ENCODE measurements at regions of chr1 and their contacts with region 1.

Region 1: DNA sequence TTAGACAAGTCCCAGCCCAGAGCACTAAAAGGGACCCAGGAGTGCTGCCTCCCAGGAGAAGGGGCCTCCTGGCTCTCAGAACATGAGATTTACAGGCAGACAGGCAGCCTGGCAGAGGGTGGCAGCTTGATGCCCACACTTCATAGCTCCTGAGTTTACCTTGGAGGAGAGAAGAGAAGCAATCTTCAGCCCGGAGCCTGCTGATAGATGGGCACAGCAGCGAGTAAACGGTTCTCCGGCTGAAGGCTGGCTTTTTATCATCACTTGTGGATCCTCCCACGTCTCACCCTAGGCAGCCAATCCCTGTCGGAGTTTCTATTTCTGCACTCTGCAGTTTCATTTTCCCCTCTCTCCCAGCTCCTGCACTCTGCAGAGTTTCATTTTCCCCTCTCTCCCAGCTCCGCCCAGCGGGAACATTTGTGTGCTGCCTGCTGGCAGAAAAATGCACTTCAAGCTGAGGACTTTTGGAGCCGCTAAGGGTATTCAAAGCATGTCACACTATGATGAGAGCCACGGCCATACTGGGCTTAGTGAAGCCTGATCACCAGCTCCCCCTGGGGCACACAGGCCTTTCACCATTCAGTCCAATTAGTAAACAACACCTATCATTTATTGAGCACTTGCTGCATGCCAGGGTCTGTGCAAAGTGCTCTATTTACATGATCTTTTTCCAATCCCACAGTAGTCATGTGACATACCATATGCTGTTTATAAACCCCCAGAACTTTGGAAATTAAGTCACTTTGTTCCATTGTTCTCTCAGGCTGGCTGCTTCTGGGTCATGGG is at the start of gene IFI6:
- DNase-seq: peak; percentile 54 to 90 (median 71)
- ATAC-seq: peak; percentile 91 to 95 (median 93)
- H3K4me3 ChIP-seq: peak within 1 kb of the TSS; percentile 58 to 71
- H3K4me3 Mint-ChIP-seq: peak within 1 kb of the TSS; percentile 89 to 97 (median 95)
- H3K27ac ChIP-seq: peak within 1 kb of the TSS; percentile 91
- H3K27ac Mint-ChIP-seq: peak within 1 kb of the TSS; percentile 98 to 99
- H3K4me1 ChIP-seq: peaks cover 12 to 42% of the 10 kb centered on the region in 2 experiments
- H3K4me1 Mint-ChIP-seq: peaks cover 32 to 46% (median 43%) of the 10 kb centered on the region in 3 donors
- H3K27me3 ChIP-seq: no peaks in the 10 kb centered on the region
- H3K27me3 Mint-ChIP-seq: no peaks in the 10 kb centered on the region
- total RNA-seq, gene IFI6: 28.2 to 52.1 (median 40.7) TPM

Region 2: GRCh38 chr1:27365372-27366112 is 306.6 kb before region 1 on chr1:
- CTCF ChIA-PET with region 1: no interaction called
- POLR2A ChIA-PET with region 1: no interaction called
- DNase-seq: peak; percentile 37 to 84 (median 70)
- ATAC-seq: peak; percentile 70 to 76 (median 72)
- H3K4me3 ChIP-seq: peak overlapping the region; percentile 53 to 68
- H3K4me3 Mint-ChIP-seq: peak overlapping the region; percentile 85 to 87 (median 86)
- H3K27ac ChIP-seq: no peak overlapping the region
- H3K27ac Mint-ChIP-seq: peak overlapping the region; percentile 57 to 82
- H3K4me1 ChIP-seq: peaks cover 15 to 41% of the 10 kb centered on the region in 2 experiments
- H3K4me1 Mint-ChIP-seq: peaks cover 38 to 48% (median 43%) of the 10 kb centered on the region in 3 donors
- H3K27me3 ChIP-seq: peaks cover 0 to 11% of the 10 kb centered on the region in 2 experiments
- H3K27me3 Mint-ChIP-seq: no peaks in the 10 kb centered on the region

Region 3: GRCh38 chr1:27719286-27720251 is 47.4 kb after region 1 on chr1:
- CTCF ChIA-PET with region 1: interaction called, 3 to 5 read pairs
- POLR2A ChIA-PET with region 1: interaction called in 1 of 2 experiments, 10 read pairs
- DNase-seq: peak in 3 of 35 experiments; percentile 4 to 35 (median 8)
- ATAC-seq: peak in 3 of 4 experiments; percentile 35 to 66 (median 57)
- H3K4me3 ChIP-seq: no peak overlapping the region
- H3K4me3 Mint-ChIP-seq: no peak overlapping the region
- H3K27ac ChIP-seq: no peak overlapping the region
- H3K27ac Mint-ChIP-seq: no peak overlapping the region
- H3K4me1 ChIP-seq: no peaks in the 10 kb centered on the region
- H3K4me1 Mint-ChIP-seq: peaks cover 0 to 1% (median 1%) of the 10 kb centered on the region in 3 donors
- H3K27me3 ChIP-seq: peaks cover 0 to 11% of the 10 kb centered on the region in 2 experiments
- H3K27me3 Mint-ChIP-seq: peaks cover 12 to 22% of the 10 kb centered on the region in 2 donors

Measured in T-cell (primary cell).